Naive thymus-derived CD8-positive, alpha-beta T cell (primary cell): ENCODE measurements at regions of chr5 and their contacts with region 1.

Region 1: DNA sequence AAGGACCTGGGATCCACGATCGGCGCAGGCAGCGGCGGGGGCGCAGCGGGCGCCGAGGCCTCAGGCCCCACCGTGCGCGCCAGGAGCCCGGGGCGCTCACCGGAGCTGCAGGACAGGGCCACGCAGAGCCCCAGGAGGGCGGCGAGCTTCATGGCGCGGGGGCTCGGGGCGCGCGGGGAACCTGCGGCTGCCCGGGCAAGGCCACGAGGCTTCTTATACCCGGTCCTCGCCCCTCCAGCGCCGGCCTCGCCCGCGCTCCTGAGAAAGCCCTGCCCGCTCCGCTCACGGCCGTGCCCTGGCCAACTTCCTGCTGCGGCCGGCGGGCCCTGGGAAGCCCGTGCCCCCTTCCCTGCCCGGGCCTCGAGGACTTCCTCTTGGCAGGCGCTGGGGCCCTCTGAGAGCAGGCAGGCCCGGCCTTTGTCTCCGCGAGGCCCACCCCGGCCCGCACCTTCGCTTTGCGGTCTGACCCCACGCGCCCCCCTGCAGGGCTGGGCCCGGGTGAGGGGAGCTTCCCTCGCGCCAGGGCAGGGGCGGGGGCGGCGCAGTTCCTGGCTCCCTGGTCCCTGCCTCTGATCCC is at the start of gene SCGB3A1:
- DNase-seq: no peak
- ATAC-seq: peak in 1 of 2 donors; percentile 35
- H3K4me3 Mint-ChIP-seq: peak within 1 kb of the TSS in 9 of 10 donors; percentile 52 to 82 (median 69)
- H3K27ac Mint-ChIP-seq: peak within 1 kb of the TSS in 2 of 10 donors; percentile 47 to 87
- H3K4me1 Mint-ChIP-seq: peaks cover 4 to 10% (median 7%) of the 10 kb centered on the region in 4 donors
- H3K27me3 Mint-ChIP-seq: peaks cover 10 to 42% (median 22%) of the 10 kb centered on the region in 5 donors
- polyA plus RNA-seq, gene SCGB3A1: not detected

Region 2: DNA sequence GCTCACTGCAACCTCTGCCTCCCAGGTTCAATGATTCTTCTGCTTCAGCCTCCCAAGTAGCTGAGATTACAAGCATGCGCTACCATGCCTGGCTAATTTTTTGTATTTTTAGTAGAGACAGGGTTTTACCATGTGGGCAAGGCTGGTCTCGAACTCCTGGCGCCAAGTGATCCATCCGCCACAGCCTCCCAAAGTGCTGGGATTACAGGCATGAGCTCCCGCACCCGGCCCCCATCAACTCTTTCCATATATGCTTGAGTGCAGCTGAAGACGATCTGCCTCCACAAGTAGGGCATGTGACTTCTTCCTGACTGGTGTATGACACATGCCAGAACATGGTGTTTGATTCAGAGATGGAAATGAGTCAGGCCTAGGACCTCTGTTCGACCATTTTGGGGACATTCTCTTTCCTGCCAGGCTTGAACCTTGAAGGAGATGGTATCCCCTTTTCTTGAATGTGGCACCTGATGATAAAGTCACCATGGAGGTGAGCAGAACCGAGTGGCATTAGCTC is 104.7 kb before region 1 on chr5:
- POLR2A ChIA-PET with region 1: no interaction called
- DNase-seq: no peak
- ATAC-seq: no peak
- H3K4me3 Mint-ChIP-seq: no peak overlapping the region
- H3K27ac Mint-ChIP-seq: no peak overlapping the region
- H3K4me1 Mint-ChIP-seq: peaks cover 0 to 4% (median under 1%) of the 10 kb centered on the region in 4 donors
- H3K27me3 Mint-ChIP-seq: no peaks in the 10 kb centered on the region

Region 3: GRCh38 chr5:180548563-180548962 is 42.8 kb before region 1 on chr5:
- POLR2A ChIA-PET with region 1: interaction called, 13 read pairs
- DNase-seq: no peak
- ATAC-seq: no peak
- H3K4me3 Mint-ChIP-seq: no peak overlapping the region
- H3K27ac Mint-ChIP-seq: peak overlapping the region in 4 of 10 donors; percentile 41 to 85 (median 61)
- H3K4me1 Mint-ChIP-seq: peaks cover 14 to 29% (median 21%) of the 10 kb centered on the region in 4 donors
- H3K27me3 Mint-ChIP-seq: no peaks in the 10 kb centered on the region

Region 4: GRCh38 chr5:180563994-180564393 is 27.4 kb before region 1 on chr5:
- POLR2A ChIA-PET with region 1: interaction called, 95 read pairs
- DNase-seq: peak in 2 of 10 donors; percentile 6 to 7
- ATAC-seq: peak; percentile 28 to 32
- H3K4me3 Mint-ChIP-seq: peak overlapping the region in 7 of 10 donors; percentile 3 to 62 (median 52)
- H3K27ac Mint-ChIP-seq: peak overlapping the region in 9 of 10 donors; percentile 13 to 89 (median 66)
- H3K4me1 Mint-ChIP-seq: peaks cover 19 to 48% (median 36%) of the 10 kb centered on the region in 4 donors
- H3K27me3 Mint-ChIP-seq: no peaks in the 10 kb centered on the region

Region 5: GRCh38 chr5:180575571-180575970 is 15.8 kb before region 1 on chr5:
- POLR2A ChIA-PET with region 1: interaction called, 95 read pairs
- DNase-seq: no peak
- ATAC-seq: no peak
- H3K4me3 Mint-ChIP-seq: peak overlapping the region in 1 of 10 donors; percentile 59
- H3K27ac Mint-ChIP-seq: peak overlapping the region in 1 of 10 donors; percentile 84
- H3K4me1 Mint-ChIP-seq: peaks cover 0 to 1% (median 0%) of the 10 kb centered on the region in 4 donors
- H3K27me3 Mint-ChIP-seq: no peaks in the 10 kb centered on the region

Region 6: GRCh38 chr5:180605554-180606214 is 14.3 kb after region 1 on chr5:
- POLR2A ChIA-PET with region 1: interaction called, 22 read pairs
- DNase-seq: peak; percentile 38 to 86 (median 59)
- ATAC-seq: peak; percentile 62 to 87
- H3K4me3 Mint-ChIP-seq: no peak overlapping the region
- H3K27ac Mint-ChIP-seq: peak overlapping the region in 2 of 10 donors; percentile 18 to 50
- H3K4me1 Mint-ChIP-seq: peaks cover 2 to 11% (median 4%) of the 10 kb centered on the region in 4 donors
- H3K27me3 Mint-ChIP-seq: no peaks in the 10 kb centered on the region

Region 7: GRCh38 chr5:180648641-180649296 is 57.4 kb after region 1 on chr5:
- POLR2A ChIA-PET with region 1: no interaction called
- DNase-seq: peak in 7 of 10 donors; percentile 9 to 66 (median 30)
- ATAC-seq: peak; percentile 60 to 69
- H3K4me3 Mint-ChIP-seq: peak overlapping the region; percentile 66 to 89 (median 84)
- H3K27ac Mint-ChIP-seq: peak overlapping the region in 5 of 10 donors; percentile 26 to 86 (median 79)
- H3K4me1 Mint-ChIP-seq: peaks cover 13 to 27% (median 19%) of the 10 kb centered on the region in 4 donors
- H3K27me3 Mint-ChIP-seq: peaks cover 0 to 33% (median 17%) of the 10 kb centered on the region in 5 donors